ENCODE measurements at regions of chr6 and their contacts with region 1.

Region 1: DNA sequence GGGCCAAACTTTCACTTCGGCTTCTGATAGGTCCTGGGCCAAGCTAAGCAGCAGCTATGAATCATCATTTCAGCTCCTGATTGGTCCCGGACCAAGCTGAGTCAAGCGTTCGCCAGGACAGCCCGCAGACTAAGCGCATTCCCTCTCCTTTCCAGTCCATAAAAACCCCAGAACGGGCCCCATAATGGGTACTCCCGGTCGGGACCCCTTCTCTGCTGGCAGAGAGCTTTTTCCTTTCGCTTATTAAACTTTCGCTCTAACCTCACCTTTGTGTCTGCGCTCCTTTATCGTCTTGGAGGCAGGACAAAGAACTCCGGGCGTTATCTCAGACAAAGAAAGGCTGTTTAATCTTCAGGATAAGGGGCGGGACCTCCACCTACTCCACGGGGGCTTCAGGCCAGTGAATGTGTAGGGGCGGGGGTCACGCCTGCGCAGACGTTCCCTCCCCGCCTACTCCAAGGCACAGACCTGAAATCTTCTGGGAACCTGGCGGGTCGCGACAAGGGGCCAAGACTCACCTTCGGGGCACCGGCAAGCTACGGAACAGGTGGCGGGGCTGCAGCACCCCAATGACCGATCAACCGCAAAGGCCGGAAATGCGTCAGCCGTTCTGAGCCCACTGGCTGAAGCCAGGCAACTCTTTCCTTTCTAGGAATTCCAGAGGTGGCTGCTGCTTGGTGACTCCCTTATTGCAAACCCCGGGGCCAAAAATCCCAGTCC is at the start of gene ZSCAN31:
- DNase-seq: peak; percentile 70
- H3K4me3 Mint-ChIP-seq: no peak within 1 kb of the TSS
- H3K27ac Mint-ChIP-seq: no peak within 1 kb of the TSS
- H3K4me1 Mint-ChIP-seq: peaks cover 4% of the 10 kb centered on the region
- H3K27me3 Mint-ChIP-seq: peaks cover 2% of the 10 kb centered on the region
- total RNA-seq, gene ZSCAN31: 1.5 and 1.9 TPM in 2 replicates

Region 2: DNA sequence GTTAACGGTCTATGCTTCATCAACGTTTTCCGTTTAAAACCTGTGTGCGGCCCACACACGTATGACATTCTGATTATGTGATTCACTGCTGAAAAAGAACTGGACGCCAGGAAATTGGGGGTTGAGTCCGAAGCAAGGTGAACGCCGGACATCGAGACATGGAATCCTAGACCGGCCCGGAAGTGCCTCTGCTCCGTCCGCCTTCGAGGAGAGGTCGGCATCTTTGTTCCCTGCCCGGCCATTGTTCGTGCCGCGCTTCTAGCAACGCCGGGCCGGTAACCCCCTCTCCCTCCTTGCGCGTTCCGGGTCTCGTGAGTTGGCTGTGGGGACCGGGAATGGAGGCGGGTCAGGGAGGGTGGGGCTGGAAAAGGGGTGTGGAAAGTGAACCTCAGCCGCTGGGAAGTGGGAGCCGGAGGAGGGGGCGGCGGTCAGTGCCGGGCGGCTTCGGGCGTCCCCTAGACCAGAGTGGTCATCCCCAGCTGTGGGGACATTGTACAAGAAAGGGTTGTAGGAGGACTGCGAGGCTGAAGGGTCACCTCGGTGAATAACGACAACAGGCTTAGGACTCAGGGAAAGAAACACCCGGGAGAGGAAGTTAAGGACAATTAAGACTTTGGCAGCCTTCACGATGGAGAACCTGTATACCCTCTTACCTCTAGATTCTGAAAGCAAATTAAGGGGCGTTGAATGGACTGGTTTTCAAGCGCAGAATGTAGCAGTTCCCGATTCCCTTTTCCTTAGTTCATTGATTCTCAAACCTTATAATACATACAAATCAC is 110.5 kb before region 1 on chr6 and contains the start of gene ZSCAN9:
- intact Hi-C with region 1: loop called (anchors 10 kb)
- DNase-seq: no peak
- H3K4me3 Mint-ChIP-seq: peak within 1 kb of the TSS; percentile 88
- H3K27ac Mint-ChIP-seq: peak within 1 kb of the TSS; percentile 82
- H3K4me1 Mint-ChIP-seq: peaks cover 35% of the 10 kb centered on the region
- H3K27me3 Mint-ChIP-seq: peaks cover 16% of the 10 kb centered on the region
- total RNA-seq, gene ZSCAN9: 9.7 and 10.8 TPM in 2 replicates

Region 3: GRCh38 chr6:28252009-28252975 is 83.4 kb before region 1 on chr6 and contains the start of gene ZKSCAN4:
- intact Hi-C with region 1: loop called (anchors 1 kb)
- DNase-seq: peak; percentile 67
- H3K4me3 Mint-ChIP-seq: peak within 1 kb of the TSS; percentile 98
- H3K27ac Mint-ChIP-seq: peak within 1 kb of the TSS; percentile 78
- H3K4me1 Mint-ChIP-seq: peaks cover 13% of the 10 kb centered on the region
- H3K27me3 Mint-ChIP-seq: no peaks in the 10 kb centered on the region
- total RNA-seq, gene ZKSCAN4: 4.6 and 5.0 TPM in 2 replicates

Region 4: GRCh38 chr6:28266962-28267694 is 68.6 kb before region 1 on chr6 and contains the start of gene ZSCAN26:
- intact Hi-C with region 1: loop called (anchors 5 kb)
- DNase-seq: peak; percentile 79
- H3K4me3 Mint-ChIP-seq: no peak within 1 kb of the TSS
- H3K27ac Mint-ChIP-seq: no peak within 1 kb of the TSS
- H3K4me1 Mint-ChIP-seq: peaks cover 28% of the 10 kb centered on the region
- H3K27me3 Mint-ChIP-seq: peaks cover 10% of the 10 kb centered on the region
- total RNA-seq, gene ZSCAN26: 6.1 and 7.7 TPM in 2 replicates

Region 5: DNA sequence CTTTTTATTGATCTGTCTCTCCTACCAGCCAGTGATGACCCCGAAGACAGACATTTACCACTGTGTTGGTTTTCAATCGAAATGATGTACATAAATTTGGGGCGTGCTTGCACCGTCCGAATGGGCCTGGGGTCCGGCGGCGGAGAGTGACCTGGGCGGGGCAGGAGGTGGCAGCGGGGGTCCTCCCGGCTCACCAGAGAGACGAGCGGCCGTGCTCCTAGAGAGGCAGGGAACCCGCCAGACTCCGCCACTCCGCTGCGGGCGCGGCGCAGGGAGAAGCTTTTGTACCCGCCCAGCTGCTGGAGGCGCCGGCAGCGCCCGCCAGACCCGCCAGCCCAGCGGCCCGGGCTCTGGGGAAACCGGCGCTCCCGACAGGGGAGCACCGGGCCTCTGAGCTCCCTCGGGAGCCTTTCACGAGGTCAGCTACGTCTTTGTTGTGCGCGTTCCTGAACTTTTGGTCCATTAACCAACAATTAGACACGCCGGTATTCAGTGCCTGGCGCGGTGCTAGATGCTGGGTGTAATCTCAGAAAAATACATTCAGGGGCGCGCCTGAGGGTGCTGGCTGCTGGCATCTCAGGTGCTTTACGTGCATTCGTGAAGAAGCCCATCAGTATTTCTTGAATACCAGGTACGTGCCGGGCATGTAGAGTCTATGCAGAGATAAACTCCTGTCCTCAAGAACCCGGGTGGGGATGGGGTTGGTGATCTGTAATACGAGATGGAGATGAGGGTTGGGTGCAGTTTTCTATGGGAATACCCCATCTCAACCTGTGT is 54.2 kb before region 1 on chr6 and contains the start of gene PGBD1:
- intact Hi-C with region 1: loop called (anchors 5 kb)
- DNase-seq: peak; percentile 40
- H3K4me3 Mint-ChIP-seq: peak within 1 kb of the TSS; percentile 85
- H3K27ac Mint-ChIP-seq: no peak within 1 kb of the TSS
- H3K4me1 Mint-ChIP-seq: peaks cover 12% of the 10 kb centered on the region
- H3K27me3 Mint-ChIP-seq: no peaks in the 10 kb centered on the region
- total RNA-seq, gene PGBD1: 3.4 and 3.8 TPM in 2 replicates

Region 6: DNA sequence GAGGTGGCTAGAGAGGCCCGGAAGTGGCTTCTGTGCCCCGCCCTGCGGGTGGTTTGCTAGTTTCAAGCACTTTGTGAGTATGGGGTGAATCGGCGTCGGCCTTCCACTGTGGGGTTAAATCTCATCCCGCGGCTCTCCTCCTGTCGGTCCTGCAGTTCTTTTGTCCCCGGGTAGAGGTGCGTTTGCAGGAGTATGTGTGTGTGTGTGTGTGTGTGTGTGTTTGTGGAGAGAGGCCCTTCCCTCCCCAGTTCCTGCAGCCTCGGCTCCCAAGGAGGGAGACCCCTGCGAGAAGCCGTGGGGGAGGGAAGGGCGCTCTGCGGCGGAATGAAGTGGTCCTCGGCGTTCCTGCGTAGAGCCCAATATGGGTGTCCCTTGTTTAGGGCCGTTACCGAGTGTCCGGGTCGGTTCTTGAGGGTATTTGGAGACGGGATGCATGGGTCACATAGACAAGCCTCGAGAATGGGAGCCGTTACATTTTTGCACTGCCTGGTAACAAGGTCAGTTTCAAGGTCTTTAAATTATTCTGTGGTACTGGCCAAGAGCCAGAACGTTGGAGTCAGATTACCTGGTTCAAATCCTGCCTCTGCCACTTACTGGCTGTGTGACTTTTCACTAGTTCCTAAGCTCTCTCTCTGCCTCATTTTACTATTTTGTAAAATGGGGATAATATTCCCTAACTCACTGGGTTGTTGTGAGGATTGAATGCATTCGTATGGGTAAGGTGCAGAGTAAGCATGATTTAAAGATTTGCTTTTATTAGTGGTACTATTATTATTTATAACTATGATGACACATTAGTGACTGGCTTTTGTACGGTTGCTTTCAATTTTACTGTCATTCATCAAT is 14.4 kb after region 1 on chr6 and contains the start of gene ZKSCAN3:
- intact Hi-C with region 1: loop called (anchors 1 kb)
- DNase-seq: peak; percentile 81
- H3K4me3 Mint-ChIP-seq: peak within 1 kb of the TSS; percentile 99
- H3K27ac Mint-ChIP-seq: peak within 1 kb of the TSS; percentile 93
- H3K4me1 Mint-ChIP-seq: peaks cover 22% of the 10 kb centered on the region
- H3K27me3 Mint-ChIP-seq: peaks cover 21% of the 10 kb centered on the region
- total RNA-seq, gene ZKSCAN3: 3.5 TPM in 2 replicates